Thyroid gland (tissue), 4 donors: ENCODE measurements at regions of chr10 and their contacts with region 1.

Region 1: GRCh38 chr10:33008499-33009243 is 50.6 kb upstream of the ITGB1 start:
- DNase-seq: peak; percentile 50 to 53
- H3K4me3 ChIP-seq: no peak overlapping the region
- H3K27ac ChIP-seq: no peak overlapping the region
- H3K4me1 ChIP-seq: peaks cover 0 to 2% of the 10 kb centered on the region in 2 donors
- H3K27me3 ChIP-seq: no peaks in the 10 kb centered on the region
- CTCF ChIP-seq: peak; percentile 91 to 99 (median 98)
- POLR2A ChIP-seq: no peak

Region 2: DNA sequence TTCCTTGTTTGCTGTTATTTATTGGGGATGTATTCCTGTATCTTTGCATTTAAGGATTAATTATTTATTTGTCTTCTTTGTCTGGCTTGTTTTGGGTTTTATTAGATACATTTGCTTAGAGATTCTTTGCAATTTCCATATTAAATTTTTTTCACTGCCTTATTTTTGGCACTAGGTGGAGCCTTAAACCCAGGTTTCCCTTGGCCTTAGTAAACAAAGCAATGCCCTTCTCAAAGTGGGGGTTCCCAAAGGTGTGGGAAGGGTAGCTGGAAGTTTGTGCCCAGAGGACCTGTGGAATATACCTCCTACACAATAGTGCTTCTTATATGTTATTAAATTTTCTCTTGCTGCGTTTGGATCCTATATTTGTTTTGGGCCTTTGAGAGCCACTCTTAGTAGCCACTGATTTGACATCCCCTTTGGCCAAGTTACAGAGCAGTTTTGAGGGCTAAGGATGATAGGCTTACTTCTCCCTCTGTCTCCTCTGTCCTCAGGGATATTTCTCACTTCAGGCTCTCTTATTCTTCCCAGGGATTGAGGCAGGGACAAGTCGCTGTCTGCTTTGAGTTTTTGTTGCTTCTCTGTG is 213.0 kb before region 1 on chr10:
- intact Hi-C with region 1: loop called (anchors 2 kb)
- DNase-seq: no peak
- H3K4me3 ChIP-seq: no peak overlapping the region
- H3K27ac ChIP-seq: no peak overlapping the region
- H3K4me1 ChIP-seq: no peaks in the 10 kb centered on the region
- H3K27me3 ChIP-seq: no peaks in the 10 kb centered on the region
- CTCF ChIP-seq: peak; percentile 32 to 81 (median 62)
- POLR2A ChIP-seq: no peak